KBM-7 (cell line): ENCODE measurements at regions of chr9 and their contacts with region 1.

Region 1: GRCh38 chr9:125407974-125408900 is 146.6 kb downstream of the GAPVD1 start:
- DNase-seq: peak; percentile 80

Region 2: GRCh38 chr9:125942125-125942524 is 533.9 kb after region 1 on chr9:
- in situ Hi-C with region 1: no loop called
- DNase-seq: no peak

Region 3: GRCh38 chr9:126228781-126229444 is 820.7 kb after region 1 on chr9:
- in situ Hi-C with region 1: loop called (anchors 25 kb)
- DNase-seq: peak; percentile 73

Region 4: DNA sequence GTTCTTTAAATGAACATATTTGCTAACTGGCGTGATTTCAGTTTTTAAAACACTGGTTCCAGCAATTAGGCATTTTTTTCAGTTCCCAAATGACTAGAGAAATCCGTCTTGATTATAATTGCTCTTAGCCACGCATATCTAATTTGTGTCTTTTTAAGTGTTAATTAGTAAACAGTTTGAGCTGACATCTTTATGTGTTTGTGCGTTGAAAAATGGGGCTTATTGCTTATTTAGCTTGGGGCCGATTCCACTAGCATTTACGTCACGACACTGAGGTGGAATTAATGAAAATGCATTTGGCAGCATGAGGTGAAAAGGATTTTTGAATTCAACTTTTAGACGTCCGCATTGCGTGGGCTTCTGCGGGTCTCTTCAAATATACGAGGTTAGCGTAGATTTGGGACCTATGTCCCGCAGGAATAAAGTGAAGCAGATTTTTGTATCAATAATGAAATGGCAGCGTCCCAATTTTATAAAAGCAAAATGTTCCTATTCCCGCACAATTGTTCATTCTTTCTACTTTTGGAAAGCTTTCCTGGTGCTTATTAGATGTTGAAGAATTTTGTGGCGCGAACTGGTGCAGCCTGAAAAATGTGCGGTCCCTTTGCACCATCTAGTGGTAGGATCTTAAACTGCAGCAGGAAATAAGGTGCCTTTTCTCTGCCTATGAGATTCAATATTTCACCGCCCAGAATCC is 1082.8 kb after region 1 on chr9:
- in situ Hi-C with region 1: loop called (anchors 25 kb)
- DNase-seq: peak; percentile 76